HCT116 (cell line): ENCODE measurements at regions of chr12 and their contacts with region 1.

Region 1: DNA sequence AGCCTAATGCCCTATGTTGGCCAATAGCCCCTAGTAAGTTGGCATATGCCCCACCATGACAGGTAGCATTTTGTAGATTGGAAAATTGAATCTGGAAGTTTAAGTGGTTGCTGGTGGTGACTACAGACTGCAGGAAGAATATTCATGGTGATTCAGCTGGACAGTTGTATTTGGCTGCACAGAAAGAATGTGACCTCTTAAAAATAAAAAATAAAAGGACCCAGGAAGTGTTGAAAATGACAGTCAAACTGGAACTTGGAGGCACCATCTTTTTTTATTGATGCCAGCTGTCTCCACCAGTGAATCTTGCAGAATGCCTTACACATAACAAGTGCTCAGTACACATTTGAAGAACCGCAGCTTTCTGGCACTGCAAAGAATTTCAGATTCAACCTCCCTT is 73.9 kb downstream of the PRMT8 start:
- DNase-seq: no peak
- ATAC-seq: no peak
- H3K4me3 ChIP-seq: no peak overlapping the region
- H3K27ac ChIP-seq: no peak overlapping the region
- H3K4me1 ChIP-seq: no peaks in the 10 kb centered on the region
- H3K27me3 ChIP-seq: peaks cover 37% of the 10 kb centered on the region
- CTCF ChIP-seq: no peak
- POLR2A ChIP-seq: no peak
- RAD21 ChIP-seq: no peak

Region 2: GRCh38 chr12:3603576-3603975 is 38.7 kb after region 1 on chr12:
- CTCF ChIA-PET with region 1: no interaction called
- POLR2A ChIA-PET with region 1: no interaction called
- RAD21 ChIA-PET with region 1: no interaction called
- intact Hi-C with region 1: loop called (anchors 1 kb)
- DNase-seq: no peak
- ATAC-seq: no peak
- H3K4me3 ChIP-seq: no peak overlapping the region
- H3K27ac ChIP-seq: no peak overlapping the region
- H3K4me1 ChIP-seq: no peaks in the 10 kb centered on the region
- H3K27me3 ChIP-seq: no peaks in the 10 kb centered on the region; the same call in 1 of the 2 replicates
- CTCF ChIP-seq: no peak
- POLR2A ChIP-seq: no peak
- RAD21 ChIP-seq: no peak